ENCODE measurements at regions of chr10 and their contacts with region 1.

Region 1: GRCh38 chr10:84360637-84361365 is 32.4 kb downstream of the CCSER2 start:
- DNase-seq: no peak
- H3K4me3 Mint-ChIP-seq: no peak overlapping the region
- H3K27ac Mint-ChIP-seq: no peak overlapping the region
- H3K4me1 Mint-ChIP-seq: peaks cover 74% of the 10 kb centered on the region
- H3K27me3 Mint-ChIP-seq: no peaks in the 10 kb centered on the region

Region 2: GRCh38 chr10:84341538-84341856 is 19.3 kb before region 1 on chr10:
- CTCF ChIA-PET with region 1: interaction called, 3 read pairs
- intact Hi-C with region 1: loop called (anchors 2 kb)
- DNase-seq: peak; percentile 67
- H3K4me3 Mint-ChIP-seq: peak overlapping the region; percentile 59
- H3K27ac Mint-ChIP-seq: peak overlapping the region; percentile 77
- H3K4me1 Mint-ChIP-seq: peaks cover 51% of the 10 kb centered on the region
- H3K27me3 Mint-ChIP-seq: no peaks in the 10 kb centered on the region

Region 3: GRCh38 chr10:84375011-84375410 is 14.2 kb after region 1 on chr10:
- CTCF ChIA-PET with region 1: interaction called, 9 read pairs
- intact Hi-C with region 1: loop called (anchors 1 kb)
- DNase-seq: peak; percentile 70
- H3K4me3 Mint-ChIP-seq: no peak overlapping the region
- H3K27ac Mint-ChIP-seq: peak overlapping the region; percentile 30
- H3K4me1 Mint-ChIP-seq: peaks cover 45% of the 10 kb centered on the region
- H3K27me3 Mint-ChIP-seq: no peaks in the 10 kb centered on the region